ENCODE measurements at regions of chr10 and their contacts with region 1.

Region 1: GRCh38 chr10:71835671-71836595 is 15.1 kb downstream of the PSAP start:
- DNase-seq: peak; percentile 97
- ATAC-seq: peak; percentile 97
- H3K4me3 ChIP-seq: peak overlapping the region; percentile 44
- H3K27ac ChIP-seq: peak overlapping the region; percentile 89
- H3K4me1 ChIP-seq: peaks cover 61% of the 10 kb centered on the region
- H3K27me3 ChIP-seq: no peaks in the 10 kb centered on the region
- CTCF ChIP-seq: no peak
- EP300 ChIP-seq: peak; percentile 87 to 93
- POLR2A ChIP-seq: no peak
- RAD21 ChIP-seq: no peak

Region 2: DNA sequence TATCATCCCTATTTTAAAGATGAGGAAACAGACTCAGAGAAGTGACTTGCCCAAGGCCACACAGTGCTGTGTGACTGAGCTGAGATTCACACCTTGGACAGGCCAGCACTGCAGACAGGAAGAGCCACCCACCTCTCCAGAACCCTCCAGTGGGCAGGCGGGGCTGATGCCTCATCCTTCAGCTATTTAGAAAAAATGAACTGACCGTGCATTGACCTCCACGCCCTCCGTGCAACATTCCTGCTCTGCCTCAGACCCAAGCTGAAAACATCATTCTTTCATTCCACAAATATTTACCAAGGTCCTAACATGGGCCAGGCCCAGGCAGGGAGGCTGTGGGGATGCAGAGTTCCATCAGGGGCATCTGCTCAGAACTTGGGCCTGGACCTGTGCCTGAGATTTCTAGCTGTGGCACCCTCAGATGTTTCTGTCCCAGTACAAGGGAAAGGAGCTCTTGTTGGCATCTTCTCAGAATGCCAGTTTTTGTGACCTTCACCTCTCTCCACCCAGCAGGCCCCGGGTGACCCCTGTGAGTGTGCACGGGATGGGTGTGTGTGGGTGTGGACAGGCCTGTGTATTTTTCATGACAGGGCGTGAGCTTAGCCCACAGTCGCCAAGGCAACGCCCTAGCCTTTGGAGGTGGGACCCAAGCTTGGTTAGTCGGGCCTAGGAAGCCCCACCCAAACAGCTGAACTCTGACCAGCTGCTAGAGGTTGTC is 69.1 kb before region 1 on chr10:
- CTCF ChIA-PET with region 1: interaction called, 20 read pairs
- POLR2A ChIA-PET with region 1: interaction called, 5 read pairs
- RAD21 ChIA-PET with region 1: interaction called, 4 read pairs
- SMC1A ChIA-PET with region 1: interaction called, 16 read pairs
- in situ Hi-C with region 1: no loop called
- intact Hi-C with region 1: no loop called
- DNase-seq: no peak
- ATAC-seq: peak; percentile 12
- H3K4me3 ChIP-seq: no peak overlapping the region
- H3K27ac ChIP-seq: no peak overlapping the region
- H3K4me1 ChIP-seq: peaks cover 32% of the 10 kb centered on the region
- H3K27me3 ChIP-seq: no peaks in the 10 kb centered on the region
- CTCF ChIP-seq: no peak
- EP300 ChIP-seq: no peak
- POLR2A ChIP-seq: no peak
- RAD21 ChIP-seq: no peak

Region 3: DNA sequence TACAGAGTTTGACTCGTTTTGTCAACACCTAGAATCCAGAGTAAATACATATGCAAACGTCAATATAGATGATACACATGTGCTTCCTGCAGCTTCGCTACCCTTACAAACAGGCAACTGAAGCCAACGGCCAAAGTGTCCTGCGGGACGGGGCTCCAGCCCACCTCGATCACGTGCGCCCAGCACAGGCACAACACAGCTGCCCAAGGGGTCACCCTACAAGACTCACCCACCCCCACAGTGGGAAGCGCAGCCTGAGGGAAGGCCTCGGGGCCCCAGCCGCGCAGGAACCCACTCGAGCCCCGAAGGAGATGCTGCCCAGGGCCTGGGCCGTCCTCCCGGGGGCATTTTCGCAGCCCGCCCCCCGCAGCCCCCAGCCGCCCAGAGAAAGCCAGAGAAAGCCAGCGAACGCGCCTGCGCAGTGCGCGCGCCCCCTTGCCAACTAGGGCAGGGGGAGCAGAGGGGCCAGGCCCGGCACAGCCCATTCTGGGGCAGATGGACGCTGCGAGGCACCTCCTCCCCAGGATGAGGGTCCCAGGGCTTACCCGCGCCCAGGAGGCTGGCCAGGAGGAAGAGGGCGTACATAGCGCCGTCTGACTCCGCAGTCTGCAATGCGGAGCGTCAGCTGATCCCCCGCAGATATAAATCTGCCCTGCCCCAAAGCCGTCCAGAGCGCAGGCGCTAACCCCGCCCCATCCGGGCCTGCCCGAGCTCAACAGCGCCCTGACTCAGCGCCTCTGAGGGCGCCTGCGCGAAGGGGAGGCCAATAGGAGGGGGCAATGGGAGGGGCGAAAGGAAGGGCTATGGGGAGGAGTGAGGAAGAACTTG is 14.9 kb after region 1 on chr10 and contains the start of gene PSAP:
- CTCF ChIA-PET with region 1: interaction called, 54 read pairs
- POLR2A ChIA-PET with region 1: interaction called, 20 read pairs
- RAD21 ChIA-PET with region 1: interaction called, 7 read pairs
- SMC1A ChIA-PET with region 1: interaction called, 10 read pairs
- in situ Hi-C with region 1: no loop called
- intact Hi-C with region 1: no loop called
- DNase-seq: peak; percentile 91
- ATAC-seq: peak; percentile 97
- H3K4me3 ChIP-seq: peak within 1 kb of the TSS; percentile 74
- H3K27ac ChIP-seq: peak within 1 kb of the TSS; percentile 79
- H3K4me1 ChIP-seq: peaks cover 14% of the 10 kb centered on the region
- H3K27me3 ChIP-seq: no peaks in the 10 kb centered on the region
- CTCF ChIP-seq: peak in 1 of 3 experiments; percentile 4; a peak in 1 of 6 replicates
- EP300 ChIP-seq: no peak
- POLR2A ChIP-seq: peak; percentile 100
- RAD21 ChIP-seq: no peak
- polyA plus RNA-seq, gene PSAP: 280 to 312 TPM

Region 4: DNA sequence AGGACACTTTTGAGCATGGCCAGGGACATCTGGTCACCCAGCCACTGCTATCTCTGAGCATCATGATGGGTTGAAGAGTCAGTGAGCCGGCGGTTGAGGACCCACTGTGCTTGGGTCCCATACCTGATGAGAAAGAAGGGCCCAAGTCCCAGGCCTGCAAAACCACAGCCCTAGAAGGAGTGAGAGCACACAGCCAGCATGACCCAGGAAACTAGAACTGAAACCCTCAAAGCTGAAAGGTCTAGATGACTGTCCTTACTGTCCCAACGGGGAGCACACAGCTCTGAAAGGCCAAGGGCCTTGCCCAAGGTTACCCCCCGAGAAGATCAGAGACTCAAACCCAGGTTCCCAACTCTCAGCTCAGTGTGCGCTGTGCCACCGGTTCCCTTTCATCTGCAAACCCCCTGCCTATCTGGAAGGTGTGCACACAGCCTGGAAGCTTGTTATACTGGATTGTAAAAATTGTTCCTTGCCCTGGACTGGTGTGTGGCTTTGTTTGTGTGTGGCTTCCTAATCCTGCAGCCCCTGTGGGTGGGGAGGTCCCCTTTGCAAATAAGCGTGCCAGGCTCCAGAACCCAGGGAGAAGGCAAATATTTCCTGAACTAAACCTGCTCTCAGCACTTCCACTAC is 37.8 kb after region 1 on chr10:
- CTCF ChIA-PET with region 1: interaction called, 7 read pairs
- POLR2A ChIA-PET with region 1: interaction called, 4 read pairs
- RAD21 ChIA-PET with region 1: interaction called, 4 read pairs
- SMC1A ChIA-PET with region 1: interaction called, 5 read pairs
- in situ Hi-C with region 1: no loop called
- intact Hi-C with region 1: loop called (anchors 1 kb)
- DNase-seq: peak; percentile 89
- ATAC-seq: peak; percentile 98
- H3K4me3 ChIP-seq: no peak overlapping the region
- H3K27ac ChIP-seq: peak overlapping the region; percentile 70
- H3K4me1 ChIP-seq: peaks cover 30% of the 10 kb centered on the region
- H3K27me3 ChIP-seq: no peaks in the 10 kb centered on the region
- CTCF ChIP-seq: no peak
- EP300 ChIP-seq: 0 out of 4 replicates have a peak, but pooled peaks of 1 of the 2 experiments have one; percentile 34
- POLR2A ChIP-seq: no peak
- RAD21 ChIP-seq: no peak

Region 5: GRCh38 chr10:71888623-71889387 is 52.9 kb after region 1 on chr10:
- CTCF ChIA-PET with region 1: interaction called, 5 read pairs
- POLR2A ChIA-PET with region 1: no interaction called
- RAD21 ChIA-PET with region 1: interaction called, 3 read pairs
- SMC1A ChIA-PET with region 1: interaction called, 6 read pairs
- in situ Hi-C with region 1: no loop called
- intact Hi-C with region 1: loop called (anchors 1 kb)
- DNase-seq: peak; percentile 78
- ATAC-seq: peak; percentile 98
- H3K4me3 ChIP-seq: peak overlapping the region; percentile 64
- H3K27ac ChIP-seq: peak overlapping the region; percentile 62
- H3K4me1 ChIP-seq: peaks cover 26% of the 10 kb centered on the region
- H3K27me3 ChIP-seq: no peaks in the 10 kb centered on the region
- CTCF ChIP-seq: 0 out of 6 replicates have a peak, but pooled peaks of 1 of the 3 experiments have one; percentile 2
- EP300 ChIP-seq: peak; percentile 10 to 67; a peak in 2 of 4 replicates
- POLR2A ChIP-seq: peak; percentile 82
- RAD21 ChIP-seq: no peak

Region 6: GRCh38 chr10:72364239-72364777 is 528.4 kb after region 1 on chr10:
- CTCF ChIA-PET with region 1: no interaction called
- POLR2A ChIA-PET with region 1: no interaction called
- RAD21 ChIA-PET with region 1: no interaction called
- SMC1A ChIA-PET with region 1: no interaction called
- in situ Hi-C with region 1: no loop called
- intact Hi-C with region 1: no loop called
- DNase-seq: peak; percentile 59
- ATAC-seq: peak; percentile 100
- H3K4me3 ChIP-seq: no peak overlapping the region
- H3K27ac ChIP-seq: 0 out of 2 replicates have a peak overlapping the region, but pooled peaks have one; percentile 29
- H3K4me1 ChIP-seq: peaks cover 3% of the 10 kb centered on the region
- H3K27me3 ChIP-seq: no peaks in the 10 kb centered on the region
- CTCF ChIP-seq: peak; percentile 94 to 96 (median 94)
- EP300 ChIP-seq: no peak
- POLR2A ChIP-seq: peak; percentile 84
- RAD21 ChIP-seq: peak; percentile 99

Measured in GM12878 (cell line).